Brain microvascular endothelial cell (primary cell): ENCODE measurements at regions of chr19 and their contacts with region 1.

Region 1: DNA sequence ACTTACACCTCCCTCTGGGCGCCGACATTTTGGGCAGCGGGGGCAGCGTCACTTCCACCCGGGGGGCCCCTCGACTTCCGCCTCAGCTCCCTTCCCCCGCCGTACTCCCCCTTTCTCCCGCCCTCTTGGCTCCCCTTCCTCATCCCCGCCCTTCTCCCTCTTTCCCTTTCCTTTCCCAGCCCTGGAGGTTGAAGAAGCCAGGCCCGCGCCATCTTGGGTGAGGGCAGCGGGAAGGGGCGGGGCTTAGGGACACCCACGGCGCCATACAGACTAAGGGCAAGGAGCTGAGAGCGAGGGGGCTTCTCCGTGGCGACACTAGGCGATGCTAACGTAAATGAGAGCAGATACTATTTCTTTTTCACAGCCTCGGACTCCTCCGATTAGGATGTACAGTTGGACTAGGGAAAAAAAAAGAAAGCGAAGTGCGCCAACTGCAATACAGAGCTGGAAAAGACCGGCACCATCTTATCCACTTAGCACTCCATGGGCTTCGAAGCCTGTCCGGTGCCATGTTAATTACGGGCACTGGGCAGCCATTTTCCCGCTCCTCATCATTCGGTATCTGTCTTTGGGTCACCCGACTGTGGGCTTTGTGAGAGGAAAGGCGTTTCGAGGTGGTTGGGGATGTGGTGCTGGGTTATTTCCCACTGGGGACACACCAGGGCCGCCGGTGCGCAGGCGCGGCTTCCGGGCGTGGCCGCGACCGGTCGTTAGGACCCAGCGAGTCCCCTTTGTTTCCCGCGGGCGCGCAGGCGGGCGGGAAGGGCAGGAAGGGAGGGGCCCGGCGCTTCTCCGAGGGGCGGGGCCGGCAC is at the start of gene FIZ1:
- DNase-seq: peak; percentile 98
- H3K4me3 ChIP-seq: peak within 1 kb of the TSS; percentile 79
- H3K27ac ChIP-seq: peak within 1 kb of the TSS; percentile 98
- H3K27me3 ChIP-seq: no peaks in the 10 kb centered on the region
- CTCF ChIP-seq: no peak

Region 2: GRCh38 chr19:55385740-55386529 is 213.7 kb before region 1 on chr19 and contains the start of gene RPL28:
- in situ Hi-C with region 1: loop called (anchors 25 kb)
- DNase-seq: peak; percentile 97
- H3K4me3 ChIP-seq: peak within 1 kb of the TSS; percentile 99
- H3K27ac ChIP-seq: peak within 1 kb of the TSS; percentile 77
- H3K27me3 ChIP-seq: no peaks in the 10 kb centered on the region
- CTCF ChIP-seq: no peak